AG04449 (cell line): ENCODE measurements at regions of chr17 and their contacts with region 1.

Region 1: GRCh38 chr17:75319904-75320691 is 30.9 kb upstream of the SLC25A19 start:
- DNase-seq: no peak
- H3K4me3 ChIP-seq: no peak overlapping the region
- CTCF ChIP-seq: no peak

Region 2: GRCh38 chr17:75289115-75289831 is 30.8 kb before region 1 on chr17 and contains the start of gene SLC25A19:
- CTCF ChIA-PET with region 1: interaction called, 16 read pairs
- POLR2A ChIA-PET with region 1: no interaction called
- DNase-seq: peak; percentile 90
- H3K4me3 ChIP-seq: peak within 1 kb of the TSS; percentile 92
- CTCF ChIP-seq: no peak

Region 3: GRCh38 chr17:75346906-75347305 is 26.8 kb after region 1 on chr17:
- CTCF ChIA-PET with region 1: interaction called, 19 read pairs
- POLR2A ChIA-PET with region 1: no interaction called
- DNase-seq: no peak
- H3K4me3 ChIP-seq: no peak overlapping the region
- CTCF ChIP-seq: no peak

Region 4: DNA sequence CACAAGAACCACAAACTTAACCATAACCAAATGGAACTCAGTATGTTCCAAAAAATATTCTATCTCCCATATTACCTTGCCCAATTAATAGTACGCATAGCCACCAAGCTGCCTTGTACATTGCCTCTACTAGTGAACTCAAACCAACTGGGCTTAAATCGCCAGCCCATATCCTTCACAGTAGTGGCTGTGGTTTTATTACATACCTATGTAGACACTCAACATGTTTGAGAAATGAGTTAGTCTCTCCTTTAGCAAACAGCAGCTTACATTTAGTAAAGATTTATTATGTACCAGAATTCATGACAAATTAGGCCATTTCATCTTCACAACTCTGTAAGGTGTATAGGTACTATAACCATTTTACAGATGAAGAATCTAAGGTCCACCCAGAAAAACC is 44.0 kb after region 1 on chr17:
- CTCF ChIA-PET with region 1: interaction called, 14 read pairs
- POLR2A ChIA-PET with region 1: interaction called, 3 read pairs
- DNase-seq: peak; percentile 54
- H3K4me3 ChIP-seq: no peak overlapping the region
- CTCF ChIP-seq: no peak

Region 5: DNA sequence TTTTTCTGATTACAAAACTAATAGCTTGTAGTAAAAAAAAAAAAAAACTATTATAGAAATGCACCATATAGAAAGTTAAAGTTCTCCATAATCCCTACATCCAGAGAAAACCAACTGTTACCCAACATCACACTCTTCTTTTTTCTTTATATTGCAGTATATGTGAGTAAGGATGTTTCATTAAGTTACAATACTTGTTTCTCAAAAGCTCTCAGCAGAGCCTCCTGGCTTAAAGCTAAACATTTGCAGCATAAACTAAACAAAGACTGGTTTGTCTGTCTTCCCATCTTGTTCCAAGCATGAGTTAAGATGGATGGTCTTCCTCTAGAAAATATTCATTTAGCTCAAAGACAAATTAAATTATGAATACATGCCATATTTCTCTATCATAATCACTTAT is 60.2 kb after region 1 on chr17:
- CTCF ChIA-PET with region 1: interaction called, 25 read pairs
- POLR2A ChIA-PET with region 1: no interaction called
- DNase-seq: no peak
- H3K4me3 ChIP-seq: no peak overlapping the region
- CTCF ChIP-seq: no peak

Region 6: DNA sequence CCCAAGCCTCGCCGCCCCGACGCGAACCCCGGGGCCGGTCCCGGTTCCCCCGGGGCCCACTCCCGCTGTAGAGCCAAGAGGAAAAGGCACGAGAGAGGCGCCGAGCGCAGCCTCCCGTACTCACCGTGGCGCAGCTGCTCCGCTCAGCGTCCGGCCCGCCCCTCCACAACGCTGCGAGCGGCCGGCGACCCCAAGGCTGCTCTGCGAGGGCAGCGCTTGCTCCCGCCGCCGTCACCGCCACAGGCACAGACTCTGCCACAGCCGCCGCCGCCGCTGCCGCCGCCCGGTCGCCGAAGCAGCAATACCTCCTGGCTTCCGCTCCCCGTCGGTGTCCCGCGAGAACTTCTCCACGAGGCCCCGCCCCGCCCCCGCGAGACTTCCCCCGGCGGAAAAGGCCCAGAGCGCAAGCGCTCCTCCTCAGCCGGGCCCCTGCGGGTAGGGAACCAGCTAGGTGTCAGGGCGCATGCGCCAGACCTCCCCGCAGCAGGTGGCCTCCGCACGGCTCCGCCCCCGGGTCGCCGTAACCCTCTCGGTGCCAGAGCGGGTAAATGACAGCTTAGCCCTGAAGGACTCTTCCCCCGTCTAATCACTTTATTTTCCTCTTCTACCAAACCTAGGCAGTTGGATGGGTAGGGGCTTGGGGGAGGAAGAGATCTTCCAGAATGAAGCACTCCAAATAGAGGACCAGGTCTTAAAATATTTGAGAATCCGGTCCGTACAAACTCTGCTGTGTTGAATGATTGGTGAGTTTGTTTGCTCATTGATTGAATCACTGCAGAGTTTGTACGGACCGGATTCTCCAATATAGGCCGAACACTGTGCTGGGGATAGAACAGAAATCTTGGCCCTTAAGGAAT is 85.5 kb after region 1 on chr17 and contains the start of gene GRB2:
- CTCF ChIA-PET with region 1: interaction called, 148 read pairs
- POLR2A ChIA-PET with region 1: no interaction called
- DNase-seq: no peak
- H3K4me3 ChIP-seq: peak within 1 kb of the TSS; percentile 93
- CTCF ChIP-seq: no peak